ENCODE measurements at regions of chr2 and their contacts with region 1.

Region 1: DNA sequence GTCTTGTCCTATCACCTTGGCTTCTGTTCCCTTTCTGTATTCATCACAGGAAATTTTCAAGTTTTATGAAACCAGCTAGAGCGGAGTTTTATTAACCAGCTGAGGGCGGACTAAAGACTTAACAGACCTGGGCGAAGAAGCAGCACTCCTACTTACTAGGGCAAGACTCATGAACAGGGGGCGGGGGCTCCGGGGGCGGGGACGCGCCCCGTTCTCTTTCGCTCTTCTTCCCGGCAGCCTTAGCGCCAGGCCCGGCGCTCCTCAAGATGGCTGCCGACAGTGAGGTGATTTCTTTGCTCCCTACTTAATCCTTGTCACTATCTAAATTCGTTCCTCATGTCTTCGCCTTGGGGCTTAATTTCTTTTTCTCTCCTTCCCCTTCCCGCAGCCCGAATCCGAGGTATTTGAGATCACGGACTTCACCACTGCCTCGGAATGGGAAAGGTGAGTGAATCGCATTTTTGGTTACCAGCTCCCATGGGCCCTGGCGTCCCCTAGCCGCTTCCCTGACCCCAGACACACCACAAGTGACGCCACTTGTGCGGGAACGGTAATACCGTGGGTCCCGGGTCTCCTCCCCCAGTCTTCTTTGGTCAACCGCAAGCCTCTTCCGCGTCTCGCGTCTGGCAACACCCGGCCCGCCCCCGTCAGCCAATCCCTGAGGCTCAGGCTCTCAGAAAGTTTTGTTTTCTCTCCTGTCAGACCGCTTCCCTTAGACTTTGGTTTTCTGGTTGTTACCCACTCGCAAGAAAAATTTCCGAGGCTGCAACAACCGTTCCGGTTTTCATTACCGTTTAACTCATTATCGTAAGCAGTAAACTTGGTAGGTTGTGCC is at the start of gene RAB3GAP1:
- DNase-seq: peak; percentile 92 to 97 (median 94)
- H3K4me3 ChIP-seq: peak within 1 kb of the TSS; percentile 98 to 99
- H3K4me3 Mint-ChIP-seq: peak within 1 kb of the TSS; percentile 92 to 99 (median 98)
- H3K27ac ChIP-seq: peak within 1 kb of the TSS; percentile 97
- H3K27ac Mint-ChIP-seq: peak within 1 kb of the TSS; percentile 97 to 100 (median 100)
- H3K4me1 ChIP-seq: peaks cover 38% of the 10 kb centered on the region
- H3K4me1 Mint-ChIP-seq: peaks cover 23 to 48% (median 35%) of the 10 kb centered on the region in 4 donors
- H3K27me3 ChIP-seq: no peaks in the 10 kb centered on the region
- H3K27me3 Mint-ChIP-seq: no peaks in the 10 kb centered on the region
- total RNA-seq, gene RAB3GAP1: 45.1 to 46.7 TPM

Region 2: GRCh38 chr2:134918526-134919340 is 133.5 kb before region 1 on chr2 and contains the start of gene CCNT2:
- CTCF ChIA-PET with region 1: no interaction called
- POLR2A ChIA-PET with region 1: interaction called, 9 read pairs
- intact Hi-C with region 1: loop called (anchors 1 kb)
- DNase-seq: peak; percentile 99 to 100 (median 100)
- H3K4me3 ChIP-seq: peak within 1 kb of the TSS; percentile 68 to 94
- H3K4me3 Mint-ChIP-seq: peak within 1 kb of the TSS; percentile 90 to 99 (median 97)
- H3K27ac ChIP-seq: peak within 1 kb of the TSS; percentile 95
- H3K27ac Mint-ChIP-seq: peak within 1 kb of the TSS; percentile 93 to 99 (median 98)
- H3K4me1 ChIP-seq: peaks cover 52% of the 10 kb centered on the region
- H3K4me1 Mint-ChIP-seq: peaks cover 22 to 61% (median 43%) of the 10 kb centered on the region in 4 donors
- H3K27me3 ChIP-seq: no peaks in the 10 kb centered on the region
- H3K27me3 Mint-ChIP-seq: peaks cover 0 to 4% of the 10 kb centered on the region in 2 donors
- total RNA-seq, gene CCNT2: 75.4 to 80.6 TPM

Region 3: DNA sequence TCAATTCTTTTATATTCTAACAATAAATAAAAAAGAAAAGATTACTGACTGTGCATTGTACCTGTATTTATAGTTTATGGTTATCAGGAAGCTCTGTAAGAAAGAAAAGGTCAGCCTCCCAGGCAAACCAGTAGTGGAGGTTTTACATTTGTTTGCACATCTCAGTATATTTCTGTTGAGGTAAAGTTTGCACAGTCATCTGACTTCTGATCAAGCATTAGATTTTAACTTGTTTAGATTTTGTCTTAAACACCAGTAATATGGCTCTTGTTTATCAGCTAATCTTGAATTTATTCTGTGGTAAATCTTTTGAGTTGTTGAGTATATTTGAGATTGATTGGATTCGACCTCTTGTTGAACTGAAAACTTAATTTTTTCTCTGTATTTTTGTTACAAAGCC is 96.5 kb before region 1 on chr2:
- CTCF ChIA-PET with region 1: no interaction called
- POLR2A ChIA-PET with region 1: no interaction called
- intact Hi-C with region 1: no loop called
- DNase-seq: no peak
- H3K4me3 ChIP-seq: no peak overlapping the region
- H3K4me3 Mint-ChIP-seq: no peak overlapping the region
- H3K27ac ChIP-seq: no peak overlapping the region
- H3K27ac Mint-ChIP-seq: no peak overlapping the region
- H3K4me1 ChIP-seq: no peaks in the 10 kb centered on the region
- H3K4me1 Mint-ChIP-seq: peaks cover 0 to 8% (median 3%) of the 10 kb centered on the region in 4 donors
- H3K27me3 ChIP-seq: no peaks in the 10 kb centered on the region
- H3K27me3 Mint-ChIP-seq: no peaks in the 10 kb centered on the region

Region 4: GRCh38 chr2:135124924-135125886 is 72.9 kb after region 1 on chr2:
- CTCF ChIA-PET with region 1: no interaction called
- POLR2A ChIA-PET with region 1: no interaction called
- intact Hi-C with region 1: loop called (anchors 5 kb)
- DNase-seq: no peak
- H3K4me3 ChIP-seq: no peak overlapping the region
- H3K4me3 Mint-ChIP-seq: no peak overlapping the region
- H3K27ac ChIP-seq: no peak overlapping the region
- H3K27ac Mint-ChIP-seq: peak overlapping the region in 1 of 7 donors; percentile 17
- H3K4me1 ChIP-seq: no peaks in the 10 kb centered on the region
- H3K4me1 Mint-ChIP-seq: no peaks in the 10 kb centered on the region
- H3K27me3 ChIP-seq: no peaks in the 10 kb centered on the region
- H3K27me3 Mint-ChIP-seq: no peaks in the 10 kb centered on the region

Region 5: GRCh38 chr2:135741395-135742324 is 689.4 kb after region 1 on chr2 and contains the start of gene UBXN4:
- CTCF ChIA-PET with region 1: no interaction called
- POLR2A ChIA-PET with region 1: interaction called, 13 read pairs
- intact Hi-C with region 1: loop called (anchors 1 kb)
- DNase-seq: peak; percentile 88 to 97 (median 91)
- H3K4me3 ChIP-seq: peak within 1 kb of the TSS; percentile 53 to 80
- H3K4me3 Mint-ChIP-seq: peak within 1 kb of the TSS; percentile 94 to 99 (median 97)
- H3K27ac ChIP-seq: peak within 1 kb of the TSS; percentile 97
- H3K27ac Mint-ChIP-seq: peak within 1 kb of the TSS in 6 of 7 donors; percentile 96 to 99 (median 97)
- H3K4me1 ChIP-seq: peaks cover 40% of the 10 kb centered on the region
- H3K4me1 Mint-ChIP-seq: peaks cover 29 to 43% (median 37%) of the 10 kb centered on the region in 4 donors
- H3K27me3 ChIP-seq: no peaks in the 10 kb centered on the region
- H3K27me3 Mint-ChIP-seq: no peaks in the 10 kb centered on the region
- total RNA-seq, gene UBXN4: 116 to 121 TPM

Region 6: DNA sequence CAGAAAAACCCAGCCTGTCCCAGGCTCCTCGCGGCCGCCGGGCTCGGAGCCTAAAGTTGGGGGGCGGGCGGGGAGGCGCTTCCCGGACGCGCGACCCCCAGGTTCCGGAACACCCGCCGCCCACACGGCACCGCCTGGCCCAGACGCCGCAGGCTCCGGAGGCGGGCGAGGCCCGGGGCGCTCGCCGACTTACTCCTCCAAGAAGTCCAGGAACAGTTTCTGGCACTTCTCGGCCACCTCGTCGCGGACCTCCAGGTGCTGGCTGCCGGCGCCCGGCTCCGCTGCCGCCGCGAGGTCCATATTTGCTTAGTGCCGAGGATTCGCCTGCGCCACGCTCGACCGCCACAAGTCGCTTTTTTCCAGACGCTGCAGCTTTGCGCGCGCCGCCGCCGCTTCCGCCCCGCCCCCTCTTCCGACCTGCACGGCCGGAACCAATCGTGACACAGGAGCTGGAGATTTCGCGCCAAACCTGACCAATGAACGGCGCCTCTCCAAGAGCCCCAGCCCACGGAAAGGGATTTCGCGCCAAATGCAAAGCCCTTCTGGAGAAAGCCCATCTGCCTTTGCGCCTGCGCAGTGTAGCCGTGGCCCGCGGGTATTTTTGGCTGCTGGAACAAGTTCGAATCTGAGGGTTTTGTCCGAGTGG is 823.9 kb after region 1 on chr2 and contains the start of gene MCM6:
- CTCF ChIA-PET with region 1: no interaction called
- POLR2A ChIA-PET with region 1: interaction called, 11 read pairs
- intact Hi-C with region 1: loop called (anchors 1 kb)
- DNase-seq: peak; percentile 97 to 98 (median 98)
- H3K4me3 ChIP-seq: peak within 1 kb of the TSS; percentile 82 to 84
- H3K4me3 Mint-ChIP-seq: peak within 1 kb of the TSS; percentile 81 to 96 (median 95)
- H3K27ac ChIP-seq: peak within 1 kb of the TSS; percentile 80
- H3K27ac Mint-ChIP-seq: peak within 1 kb of the TSS; percentile 94 to 97 (median 95)
- H3K4me1 ChIP-seq: peaks cover 31% of the 10 kb centered on the region
- H3K4me1 Mint-ChIP-seq: peaks cover 27 to 47% (median 37%) of the 10 kb centered on the region in 4 donors
- H3K27me3 ChIP-seq: no peaks in the 10 kb centered on the region
- H3K27me3 Mint-ChIP-seq: peaks cover 0 to 1% of the 10 kb centered on the region in 2 donors
- total RNA-seq, gene MCM6: 31.2 to 32.7 TPM